MCF 10A (cell line): ENCODE measurements at regions of chr19 and their contacts with region 1.

Region 1: DNA sequence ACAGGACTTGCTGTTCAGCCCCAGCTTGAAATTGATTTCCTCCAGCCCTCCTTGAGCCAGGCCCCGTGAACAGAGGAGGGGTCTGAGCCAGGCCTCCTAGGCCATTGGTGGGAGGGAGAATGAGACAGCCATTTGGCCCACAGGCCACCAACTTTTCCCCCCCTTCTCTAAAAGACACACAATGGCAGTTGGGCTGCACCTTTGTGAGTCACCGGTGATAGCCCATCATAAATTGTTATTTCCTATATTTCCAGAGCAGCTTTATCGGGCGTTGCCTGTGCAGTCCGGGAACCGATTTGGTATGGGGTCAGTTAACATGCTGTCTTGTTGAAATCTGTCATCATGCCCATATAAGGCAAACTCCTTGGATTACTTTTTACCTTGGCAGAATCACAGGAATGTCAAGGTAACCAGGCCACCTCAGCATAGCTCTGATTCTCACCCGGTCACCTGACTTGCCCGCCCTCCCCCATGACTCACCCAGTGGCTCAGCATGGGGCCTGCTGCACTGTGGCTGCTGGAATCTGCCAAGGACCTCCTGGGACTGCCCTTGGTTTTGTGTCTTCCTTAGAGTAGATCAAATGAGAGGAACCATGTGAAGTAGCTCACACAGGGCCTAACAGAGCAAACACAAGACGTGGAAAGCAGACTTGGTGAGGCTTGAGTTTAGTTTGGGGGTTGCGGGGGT is 36.1 kb downstream of the ACTN4 start:
- DNase-seq: peak; percentile 99
- H3K4me3 Mint-ChIP-seq: peak overlapping the region; percentile 48
- H3K27ac Mint-ChIP-seq: peak overlapping the region; percentile 98
- H3K4me1 Mint-ChIP-seq: peaks cover 68% of the 10 kb centered on the region
- H3K27me3 Mint-ChIP-seq: no peaks in the 10 kb centered on the region
- CTCF ChIP-seq: no peak

Region 2: GRCh38 chr19:38666663-38667511 is 16.6 kb before region 1 on chr19:
- CTCF ChIA-PET with region 1: interaction called, 4 read pairs
- POLR2A ChIA-PET with region 1: interaction called, 521 read pairs
- intact Hi-C with region 1: no loop called
- DNase-seq: peak; percentile 51
- H3K4me3 Mint-ChIP-seq: no peak overlapping the region
- H3K27ac Mint-ChIP-seq: peak overlapping the region; percentile 87
- H3K4me1 Mint-ChIP-seq: peaks cover 53% of the 10 kb centered on the region
- H3K27me3 Mint-ChIP-seq: no peaks in the 10 kb centered on the region
- CTCF ChIP-seq: no peak

Region 3: GRCh38 chr19:38693380-38694223 is 10.1 kb after region 1 on chr19:
- CTCF ChIA-PET with region 1: interaction called, 3 read pairs
- POLR2A ChIA-PET with region 1: interaction called, 31 read pairs
- intact Hi-C with region 1: no loop called
- DNase-seq: peak; percentile 59
- H3K4me3 Mint-ChIP-seq: no peak overlapping the region
- H3K27ac Mint-ChIP-seq: peak overlapping the region; percentile 98
- H3K4me1 Mint-ChIP-seq: peaks cover 53% of the 10 kb centered on the region
- H3K27me3 Mint-ChIP-seq: no peaks in the 10 kb centered on the region
- CTCF ChIP-seq: no peak